ENCODE measurements at regions of chr12 and their contacts with region 1.

Region 1: DNA sequence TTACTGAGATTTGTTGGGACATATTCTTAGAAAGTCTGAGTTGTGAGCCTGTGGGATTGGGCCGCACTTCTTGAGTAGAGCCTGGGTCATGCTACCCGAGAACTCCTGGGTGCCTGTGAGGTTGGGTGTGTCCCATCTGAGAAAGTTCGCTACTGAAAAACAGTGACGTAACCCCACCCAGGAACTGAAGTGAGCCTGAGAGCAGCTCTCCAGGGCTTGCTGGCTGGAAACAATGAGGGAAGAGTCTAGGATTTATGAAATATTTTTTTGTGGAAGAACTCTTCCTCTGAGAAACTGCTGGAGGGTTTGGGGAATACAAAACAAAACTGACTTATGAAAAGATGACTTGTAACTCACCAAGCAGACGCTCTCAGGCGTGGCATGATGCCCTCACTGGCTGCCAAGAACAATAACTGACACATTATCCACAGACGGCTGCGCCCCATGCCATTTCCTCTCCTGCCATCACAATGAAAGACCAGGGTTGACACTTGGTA is 69.2 kb downstream of the RASSF3 start:
- DNase-seq: peak; percentile 80
- H3K4me3 ChIP-seq: no peak overlapping the region
- H3K27ac ChIP-seq: peak overlapping the region; percentile 88
- H3K4me1 ChIP-seq: peaks cover 31% of the 10 kb centered on the region
- H3K27me3 ChIP-seq: no peaks in the 10 kb centered on the region
- CTCF ChIP-seq: no peak

Region 2: GRCh38 chr12:63410197-63410596 is 1269.3 kb before region 1 on chr12:
- intact Hi-C with region 1: no loop called
- DNase-seq: no peak
- H3K4me3 ChIP-seq: no peak overlapping the region
- H3K27ac ChIP-seq: no peak overlapping the region
- H3K4me1 ChIP-seq: no peaks in the 10 kb centered on the region
- H3K27me3 ChIP-seq: no peaks in the 10 kb centered on the region
- CTCF ChIP-seq: no peak

Region 3: GRCh38 chr12:64625243-64626077 is 54.1 kb before region 1 on chr12:
- intact Hi-C with region 1: loop called (anchors 5 kb)
- DNase-seq: peak; percentile 74
- H3K4me3 ChIP-seq: peak overlapping the region; percentile 16
- H3K27ac ChIP-seq: peak overlapping the region; percentile 91
- H3K4me1 ChIP-seq: peaks cover 14% of the 10 kb centered on the region
- H3K27me3 ChIP-seq: no peaks in the 10 kb centered on the region
- CTCF ChIP-seq: no peak

Measured in colonic mucosa (tissue), 4 donors.